AG04449 (cell line): ENCODE measurements at regions of chr2 and their contacts with region 1.

Region 1: DNA sequence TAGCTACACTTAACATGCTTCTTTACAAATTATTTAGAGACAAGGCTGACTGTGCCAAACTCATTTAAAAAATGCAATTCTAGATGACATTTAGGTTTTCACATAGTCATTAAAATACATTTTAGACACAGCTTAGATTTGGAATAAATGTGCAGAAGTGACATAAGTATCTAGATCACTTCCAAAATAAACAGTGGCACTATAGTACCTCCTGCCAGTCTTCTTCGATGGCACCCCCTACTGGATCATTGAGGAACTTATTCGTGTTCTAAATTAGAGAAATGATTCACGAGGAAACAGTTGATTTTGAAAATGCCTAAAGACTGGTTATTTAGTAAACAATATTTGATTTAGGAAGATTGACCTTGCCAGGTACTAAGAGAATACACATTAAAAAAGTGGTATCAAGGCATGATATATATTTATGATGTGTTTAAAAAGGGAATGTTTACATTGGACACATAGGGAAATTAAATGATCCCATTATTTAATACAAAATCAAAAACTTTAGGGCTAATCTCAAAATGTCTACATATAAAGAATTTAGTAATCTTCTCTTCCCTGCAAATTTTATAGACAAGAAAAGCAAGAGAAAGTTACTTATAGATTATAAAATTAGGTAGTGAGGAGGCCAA is 323.9 kb downstream of the XIRP2 start:
- DNase-seq: no peak
- H3K4me3 ChIP-seq: no peak overlapping the region
- CTCF ChIP-seq: peak; percentile 65

Region 2: GRCh38 chr2:166539340-166540162 is 672.6 kb before region 1 on chr2:
- CTCF ChIA-PET with region 1: interaction called, 15 read pairs
- POLR2A ChIA-PET with region 1: no interaction called
- DNase-seq: no peak
- H3K4me3 ChIP-seq: no peak overlapping the region; the same call in 1 of the 2 replicates
- CTCF ChIP-seq: peak; percentile 67

Region 3: DNA sequence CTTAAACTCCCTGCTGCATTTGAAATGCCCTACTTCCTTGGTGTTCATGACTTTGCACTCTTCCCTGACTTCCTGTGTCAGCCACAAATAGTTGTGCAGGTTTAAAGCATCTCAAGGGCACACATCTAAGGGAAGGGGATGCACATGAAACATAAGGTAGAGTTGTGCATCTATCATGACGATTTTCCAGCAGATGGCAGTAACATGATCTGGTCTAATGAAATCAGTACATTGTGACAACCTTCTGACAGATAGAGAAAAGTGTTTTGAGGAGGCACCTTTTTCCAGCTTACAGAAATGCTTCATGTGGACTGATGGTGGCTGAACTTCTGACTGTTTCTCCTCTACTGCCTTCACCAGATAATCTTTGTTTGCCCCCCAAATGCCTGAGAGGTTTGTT is 85.0 kb before region 1 on chr2:
- CTCF ChIA-PET with region 1: interaction called, 256 read pairs
- POLR2A ChIA-PET with region 1: no interaction called
- DNase-seq: no peak
- H3K4me3 ChIP-seq: no peak overlapping the region
- CTCF ChIP-seq: peak; percentile 37

Region 4: DNA sequence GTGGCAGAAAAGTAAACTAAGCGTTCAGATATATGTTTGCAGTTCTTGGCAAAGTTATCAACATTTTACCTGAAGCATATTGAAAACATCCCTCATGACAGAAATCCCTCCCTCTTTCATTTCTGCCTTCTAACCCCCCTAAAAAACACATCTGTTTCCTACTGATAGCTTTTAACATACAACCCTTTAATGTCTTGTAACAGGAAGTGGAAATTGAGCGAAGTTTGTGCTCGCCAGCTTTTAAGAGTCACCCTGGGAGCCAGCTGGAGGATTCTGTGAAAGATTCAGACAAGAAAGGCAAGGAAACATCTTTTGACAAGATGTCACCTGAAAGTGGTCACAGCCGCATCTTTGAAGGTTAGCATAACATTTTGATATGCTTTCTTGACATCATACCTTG is 76.4 kb before region 1 on chr2:
- CTCF ChIA-PET with region 1: interaction called, 256 read pairs
- POLR2A ChIA-PET with region 1: no interaction called
- DNase-seq: no peak
- H3K4me3 ChIP-seq: no peak overlapping the region
- CTCF ChIP-seq: no peak

Region 5: GRCh38 chr2:167196461-167197252 is 15.5 kb before region 1 on chr2:
- CTCF ChIA-PET with region 1: interaction called, 34 read pairs
- POLR2A ChIA-PET with region 1: no interaction called
- DNase-seq: no peak
- H3K4me3 ChIP-seq: no peak overlapping the region
- CTCF ChIP-seq: no peak